K562 (cell line): ENCODE measurements at regions of chr9 and their contacts with region 1.

Region 1: DNA sequence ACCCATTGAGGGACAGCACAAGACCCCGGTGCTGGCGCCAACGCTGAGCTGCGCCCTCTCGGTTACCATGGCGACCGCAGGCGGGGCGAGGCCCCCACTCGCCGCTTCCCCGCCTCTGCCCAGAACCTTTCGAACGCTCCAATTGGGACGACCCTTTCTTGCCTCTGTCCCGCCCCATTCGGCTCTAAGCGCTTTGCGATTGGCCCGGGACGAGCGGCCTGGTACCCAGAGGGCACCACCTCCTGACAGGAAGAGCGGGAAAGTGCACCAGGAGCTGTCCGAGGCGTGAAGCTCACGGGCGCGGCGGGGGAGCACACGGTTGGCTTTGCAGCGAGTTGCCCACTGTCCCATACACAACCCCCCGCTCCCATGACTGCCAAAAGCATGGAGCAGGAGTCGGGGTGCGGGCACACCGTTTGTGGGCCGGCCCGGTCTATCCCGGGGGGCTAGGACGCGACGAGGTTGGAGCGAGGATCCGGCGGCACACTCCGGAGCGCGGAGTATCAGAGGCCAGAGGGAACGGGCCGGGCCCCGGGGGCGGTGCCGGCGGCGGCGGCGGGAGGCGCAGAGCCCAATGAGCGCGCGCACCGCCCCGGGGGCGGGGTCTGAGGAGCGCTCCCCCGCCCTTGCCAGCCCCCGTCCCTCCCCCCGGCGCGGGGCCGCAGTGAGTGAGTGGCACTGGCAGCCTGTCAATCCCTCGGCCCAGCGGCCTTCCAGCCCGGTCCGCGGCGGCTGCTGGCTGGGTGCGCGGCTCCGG is 978 bp upstream of the PBX3 start:
- DNase-seq: peak; percentile 89 to 94 (median 93)
- ATAC-seq: peak; percentile 98
- H3K4me3 ChIP-seq: peak overlapping the region; percentile 57
- H3K27ac ChIP-seq: no peak overlapping the region
- H3K4me1 ChIP-seq: peaks cover 8 to 26% of the 10 kb centered on the region in 2 experiments
- H3K27me3 ChIP-seq: peaks cover 31 to 36% of the 10 kb centered on the region in 2 experiments
- CTCF ChIP-seq: no peak
- EP300 ChIP-seq: no peak
- POLR2A ChIP-seq: no peak
- RAD21 ChIP-seq: no peak

Region 2: DNA sequence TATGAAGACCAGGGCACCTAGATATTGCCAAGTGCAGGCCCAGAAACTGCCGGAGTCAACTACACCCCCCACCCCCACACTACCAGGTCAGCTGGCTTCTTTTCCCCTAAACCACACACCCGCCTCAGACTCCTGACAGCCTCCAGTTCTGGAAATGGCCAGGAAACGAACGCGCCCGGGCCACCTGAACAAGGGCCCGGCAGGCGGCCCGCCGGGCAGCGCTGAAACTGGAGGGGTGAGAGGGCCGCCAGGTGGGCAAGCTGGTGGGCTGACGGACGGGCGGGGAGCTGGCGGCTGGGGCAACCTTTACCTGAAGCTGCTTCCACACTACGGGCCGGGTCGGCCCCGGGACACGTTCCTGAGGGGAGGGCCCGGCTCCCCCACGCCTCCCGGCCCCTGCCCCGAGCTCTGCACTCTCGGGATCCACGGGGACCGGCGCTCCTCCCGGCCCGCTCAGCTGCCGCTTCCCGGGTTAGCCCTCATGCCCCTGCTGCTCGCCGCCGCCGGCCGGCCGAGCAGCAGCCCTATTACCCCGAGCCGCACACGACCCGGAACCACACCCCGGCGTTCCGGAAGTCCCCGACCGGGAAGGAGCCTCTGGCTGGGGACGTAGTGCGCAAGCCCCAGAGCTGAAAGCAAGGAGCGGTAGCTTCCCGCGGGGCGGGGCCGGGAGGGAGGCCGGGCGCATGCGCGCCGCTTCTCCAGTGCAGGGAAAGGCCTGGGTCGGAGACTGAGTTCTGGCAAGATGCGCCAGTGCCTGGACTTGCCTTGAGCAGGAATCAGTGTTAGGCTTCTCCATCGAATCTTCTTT is 39.3 kb before region 1 on chr9 and contains the start of gene MAPKAP1:
- CTCF ChIA-PET with region 1: no interaction called
- POLR2A ChIA-PET with region 1: interaction called, 3 read pairs
- in situ Hi-C with region 1: no loop called
- intact Hi-C with region 1: loop called (anchors 5 kb)
- DNase-seq: peak; percentile 96 to 97 (median 97)
- ATAC-seq: peak; percentile 100
- H3K4me3 ChIP-seq: peak within 1 kb of the TSS; percentile 99
- H3K27ac ChIP-seq: peak within 1 kb of the TSS; percentile 80
- H3K4me1 ChIP-seq: peaks cover 5 to 13% of the 10 kb centered on the region in 2 experiments; a peak in 4 of 5 replicates
- H3K27me3 ChIP-seq: peaks cover 0 to 4% of the 10 kb centered on the region in 2 experiments; a peak in 3 of 5 replicates
- CTCF ChIP-seq: 0 out of 6 replicates have a peak, but pooled peaks of 1 of the 3 experiments have one; percentile 0
- EP300 ChIP-seq: 0 out of 2 replicates have a peak, but pooled peaks have one; percentile 19
- POLR2A ChIP-seq: peak; percentile 94
- RAD21 ChIP-seq: no peak
- polyA plus RNA-seq, gene MAPKAP1: 2.6 to 3.3 TPM

Region 3: DNA sequence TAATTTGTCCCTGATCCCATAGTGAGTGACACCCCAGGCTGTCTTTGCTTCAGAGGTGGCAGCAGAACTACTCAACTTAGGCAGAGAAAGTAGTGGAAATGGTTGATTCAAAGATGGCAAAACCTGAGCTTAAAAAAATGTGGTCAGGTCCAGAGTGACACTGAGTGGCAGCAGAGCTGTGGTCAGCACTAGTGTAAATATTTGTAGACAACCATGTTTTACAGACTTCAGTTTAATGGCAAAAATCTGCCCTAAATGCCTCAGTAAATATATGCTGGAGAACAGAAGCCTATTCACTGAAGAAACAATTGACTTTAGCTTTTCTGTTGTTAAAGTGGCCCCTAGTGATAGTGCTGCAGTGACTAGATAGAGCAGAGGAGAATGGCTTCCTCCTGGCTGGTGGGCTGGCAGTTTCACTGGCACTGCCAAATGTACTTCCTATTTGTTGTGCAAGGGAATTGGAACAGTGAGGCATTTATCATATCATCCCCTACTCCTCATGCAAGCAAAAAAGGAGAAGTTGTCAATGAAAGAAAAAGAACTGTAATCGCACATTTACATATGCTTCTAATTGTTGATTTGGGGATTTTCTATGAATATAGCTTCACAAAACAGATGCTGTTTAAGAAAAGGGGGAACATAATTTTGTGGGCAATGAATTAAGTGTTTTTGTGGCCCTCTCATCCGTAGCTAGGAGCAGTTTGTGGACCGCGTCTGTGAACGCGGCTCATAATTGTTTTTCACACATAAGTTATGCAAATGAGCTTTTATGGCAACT is 13.0 kb after region 1 on chr9:
- CTCF ChIA-PET with region 1: no interaction called
- POLR2A ChIA-PET with region 1: interaction called, 10 read pairs
- in situ Hi-C with region 1: no loop called
- intact Hi-C with region 1: no loop called
- DNase-seq: no peak
- ATAC-seq: no peak
- H3K4me3 ChIP-seq: no peak overlapping the region
- H3K27ac ChIP-seq: no peak overlapping the region
- H3K4me1 ChIP-seq: no peaks in the 10 kb centered on the region
- H3K27me3 ChIP-seq: peaks cover 4 to 5% of the 10 kb centered on the region in 2 experiments; a peak in 3 of 5 replicates
- CTCF ChIP-seq: no peak
- EP300 ChIP-seq: no peak
- POLR2A ChIP-seq: no peak
- RAD21 ChIP-seq: no peak